ENCODE measurements at regions of chr10 and their contacts with region 1.

Region 1: DNA sequence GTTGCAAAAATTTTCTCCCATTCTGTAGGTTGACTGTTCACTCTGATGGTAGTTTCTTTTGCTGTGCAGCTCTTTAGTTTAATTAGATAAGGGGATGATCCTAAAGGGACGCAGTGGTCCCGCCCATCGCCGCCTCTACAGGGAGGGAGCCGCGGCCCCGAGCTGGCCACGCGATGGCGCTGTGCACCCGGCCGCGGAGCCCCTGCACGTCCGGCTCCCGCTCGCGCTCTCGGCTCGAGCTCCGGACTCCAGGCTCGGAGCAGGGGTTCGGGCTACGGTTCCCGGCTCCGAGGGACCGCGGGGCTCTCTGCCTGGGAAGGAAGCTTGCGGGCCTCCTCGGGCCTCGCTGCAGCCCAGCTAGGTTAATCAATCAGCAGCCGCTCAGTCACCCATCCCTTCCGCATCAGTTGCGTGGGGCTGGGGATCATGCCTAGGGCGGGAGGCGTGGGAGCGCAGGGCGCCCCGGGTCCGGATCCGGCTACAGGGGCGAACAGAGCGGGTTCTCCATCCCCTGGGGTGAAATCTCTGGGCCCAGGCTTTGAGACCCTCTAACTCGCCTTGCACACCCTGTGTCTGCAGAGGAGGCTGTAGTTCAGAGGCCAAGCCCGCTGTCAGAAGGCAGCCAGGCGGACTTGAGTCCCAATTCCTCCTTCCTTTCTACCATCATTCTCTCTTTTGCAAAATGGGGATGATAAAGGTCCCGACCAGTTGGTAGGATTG is 97.9 kb downstream of the WDR11 start:
- DNase-seq: peak; percentile 80
- H3K4me3 Mint-ChIP-seq: no peak overlapping the region
- H3K27ac Mint-ChIP-seq: no peak overlapping the region
- H3K4me1 Mint-ChIP-seq: peaks cover 20% of the 10 kb centered on the region
- H3K27me3 Mint-ChIP-seq: no peaks in the 10 kb centered on the region
- CTCF ChIP-seq: peak; percentile 58

Region 2: GRCh38 chr10:120770496-120770895 is 178.6 kb before region 1 on chr10:
- CTCF ChIA-PET with region 1: no interaction called
- intact Hi-C with region 1: no loop called
- DNase-seq: no peak
- H3K4me3 Mint-ChIP-seq: no peak overlapping the region
- H3K27ac Mint-ChIP-seq: no peak overlapping the region
- H3K4me1 Mint-ChIP-seq: no peaks in the 10 kb centered on the region
- H3K27me3 Mint-ChIP-seq: peaks cover 54% of the 10 kb centered on the region
- CTCF ChIP-seq: no peak

Region 3: DNA sequence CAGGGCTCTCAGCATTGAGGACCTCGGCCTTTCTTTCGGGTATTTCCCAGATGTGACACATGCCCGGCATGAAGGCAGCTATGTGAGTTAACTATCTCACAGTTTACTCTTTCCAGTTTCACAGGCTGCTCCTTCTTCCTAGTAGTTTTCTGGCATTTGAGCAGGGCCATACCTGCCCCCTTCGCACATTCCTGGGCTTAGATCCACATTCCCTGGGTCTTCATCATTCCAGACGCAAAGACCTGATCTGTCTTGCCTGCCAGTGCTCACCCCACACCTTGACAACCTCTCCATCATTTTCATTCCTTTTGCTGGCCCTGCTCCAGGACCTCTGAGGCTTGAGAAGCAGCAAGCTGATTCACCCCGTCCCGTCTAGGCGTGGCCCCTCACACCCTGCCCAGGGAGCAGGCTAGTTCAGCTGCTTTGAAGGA is 129.6 kb after region 1 on chr10:
- CTCF ChIA-PET with region 1: interaction called, 3 read pairs
- intact Hi-C with region 1: loop called (anchors 2 kb)
- DNase-seq: peak; percentile 44
- H3K4me3 Mint-ChIP-seq: no peak overlapping the region
- H3K27ac Mint-ChIP-seq: no peak overlapping the region
- H3K4me1 Mint-ChIP-seq: peaks cover 12% of the 10 kb centered on the region
- H3K27me3 Mint-ChIP-seq: no peaks in the 10 kb centered on the region
- CTCF ChIP-seq: no peak